Aorta (tissue), 5 donors: ENCODE measurements at regions of chr9 and their contacts with region 1.

Region 1: DNA sequence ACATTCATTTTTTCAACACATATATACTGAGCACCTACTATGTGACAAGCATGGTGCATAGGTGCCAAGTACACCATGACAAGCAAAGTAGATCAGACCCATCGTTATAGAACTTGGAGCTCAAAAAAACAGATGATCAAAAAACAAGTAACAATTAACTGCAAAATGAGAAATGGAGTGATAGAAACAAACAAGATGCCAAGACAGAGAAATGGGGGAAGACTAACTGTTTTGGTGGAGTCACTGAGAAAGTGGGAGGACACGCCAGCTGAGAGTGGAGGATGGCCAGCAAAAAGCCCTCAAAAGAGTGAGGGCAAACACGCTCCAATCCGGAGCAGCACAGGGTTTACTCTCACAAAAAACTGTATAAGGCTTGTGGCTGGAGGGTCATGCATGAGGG is 50.6 kb downstream of the TTC39B start:
- DNase-seq: no peak
- ATAC-seq: no peak
- H3K4me3 ChIP-seq: no peak overlapping the region
- H3K27ac ChIP-seq: peak overlapping the region in 1 of 2 donors; percentile 43
- H3K4me1 ChIP-seq: peaks cover 0 to 2% of the 10 kb centered on the region in 2 donors
- H3K27me3 ChIP-seq: no peaks in the 10 kb centered on the region

Region 2: GRCh38 chr9:15077946-15078729 is 178.3 kb before region 1 on chr9:
- intact Hi-C with region 1: no loop called
- DNase-seq: no peak
- ATAC-seq: no peak
- H3K4me3 ChIP-seq: no peak overlapping the region
- H3K27ac ChIP-seq: no peak overlapping the region
- H3K4me1 ChIP-seq: no peaks in the 10 kb centered on the region
- H3K27me3 ChIP-seq: peaks cover 0 to 2% of the 10 kb centered on the region in 2 donors

Region 3: DNA sequence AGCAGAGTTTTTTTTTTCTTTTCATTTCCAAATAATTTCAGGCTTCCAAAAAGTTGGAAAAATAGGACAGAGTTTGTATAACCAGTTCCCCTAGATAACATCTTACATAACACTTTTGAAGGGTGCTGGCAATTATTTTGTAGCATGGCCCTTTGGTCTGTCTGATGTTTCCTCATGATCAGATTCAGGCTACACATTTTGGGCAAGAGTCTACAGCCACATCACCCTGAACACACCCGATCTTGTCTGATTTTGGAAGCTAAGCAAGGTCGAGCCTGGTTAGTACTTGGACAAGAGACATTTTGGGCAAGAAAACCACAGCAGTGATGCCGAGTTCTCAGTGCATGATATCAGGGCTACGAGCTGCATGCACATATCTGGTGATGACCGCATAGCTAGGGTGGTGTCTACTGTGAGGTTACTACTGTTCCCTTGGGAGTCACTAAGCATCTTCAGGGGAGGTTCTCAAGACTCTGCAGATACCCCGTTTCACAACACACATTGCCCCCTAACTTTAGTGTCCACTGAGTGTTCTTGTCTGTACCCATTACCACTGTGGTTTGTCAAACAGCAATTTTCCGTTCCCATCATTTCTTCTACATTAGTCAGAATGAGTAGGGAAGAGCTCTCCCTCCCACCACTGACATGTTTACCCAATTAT is 35.6 kb before region 1 on chr9:
- intact Hi-C with region 1: loop called in 1 of 2 experiments (anchors 5 kb)
- DNase-seq: no peak
- ATAC-seq: peak; percentile 67
- H3K4me3 ChIP-seq: no peak overlapping the region
- H3K27ac ChIP-seq: no peak overlapping the region
- H3K4me1 ChIP-seq: peaks cover 0 to 8% of the 10 kb centered on the region in 2 donors
- H3K27me3 ChIP-seq: no peaks in the 10 kb centered on the region

Region 4: GRCh38 chr9:15522130-15522755 is 265.8 kb after region 1 on chr9:
- intact Hi-C with region 1: no loop called
- DNase-seq: no peak
- ATAC-seq: no peak
- H3K4me3 ChIP-seq: no peak overlapping the region
- H3K27ac ChIP-seq: no peak overlapping the region
- H3K4me1 ChIP-seq: no peaks in the 10 kb centered on the region
- H3K27me3 ChIP-seq: no peaks in the 10 kb centered on the region